Naive thymus-derived CD8-positive, alpha-beta T cell (primary cell): ENCODE measurements at regions of chr19 and their contacts with region 1.

Region 1: GRCh38 chr19:8389891-8390616 is at the start of gene RAB11B:
- DNase-seq: peak; percentile 90 to 99 (median 98)
- ATAC-seq: peak; percentile 92 to 93
- H3K4me3 Mint-ChIP-seq: peak within 1 kb of the TSS; percentile 86 to 97 (median 93)
- H3K27ac Mint-ChIP-seq: peak within 1 kb of the TSS; percentile 81 to 99 (median 96)
- H3K4me1 Mint-ChIP-seq: peaks cover 9 to 48% (median 32%) of the 10 kb centered on the region in 4 donors
- H3K27me3 Mint-ChIP-seq: no peaks in the 10 kb centered on the region
- polyA plus RNA-seq, gene RAB11B: 46.9 to 73.6 (median 53.9) TPM

Region 2: GRCh38 chr19:8401981-8402411 is 11.9 kb after region 1 on chr19:
- POLR2A ChIA-PET with region 1: no interaction called
- DNase-seq: no peak
- ATAC-seq: no peak
- H3K4me3 Mint-ChIP-seq: no peak overlapping the region
- H3K27ac Mint-ChIP-seq: no peak overlapping the region
- H3K4me1 Mint-ChIP-seq: peaks cover 5 to 17% (median 5%) of the 10 kb centered on the region in 4 donors
- H3K27me3 Mint-ChIP-seq: no peaks in the 10 kb centered on the region

Region 3: GRCh38 chr19:8412783-8413628 is 23.0 kb after region 1 on chr19 and contains the start of gene MARCHF2:
- POLR2A ChIA-PET with region 1: interaction called, 10 read pairs
- DNase-seq: peak; percentile 88 to 97 (median 94)
- ATAC-seq: peak; percentile 99 to 100
- H3K4me3 Mint-ChIP-seq: peak within 1 kb of the TSS; percentile 57 to 85 (median 74)
- H3K27ac Mint-ChIP-seq: peak within 1 kb of the TSS in 7 of 10 donors; percentile 19 to 71 (median 65)
- H3K4me1 Mint-ChIP-seq: peaks cover 3 to 19% (median 7%) of the 10 kb centered on the region in 4 donors
- H3K27me3 Mint-ChIP-seq: no peaks in the 10 kb centered on the region
- polyA plus RNA-seq, gene MARCHF2: 21.1 to 40.1 (median 38.2) TPM

Region 4: DNA sequence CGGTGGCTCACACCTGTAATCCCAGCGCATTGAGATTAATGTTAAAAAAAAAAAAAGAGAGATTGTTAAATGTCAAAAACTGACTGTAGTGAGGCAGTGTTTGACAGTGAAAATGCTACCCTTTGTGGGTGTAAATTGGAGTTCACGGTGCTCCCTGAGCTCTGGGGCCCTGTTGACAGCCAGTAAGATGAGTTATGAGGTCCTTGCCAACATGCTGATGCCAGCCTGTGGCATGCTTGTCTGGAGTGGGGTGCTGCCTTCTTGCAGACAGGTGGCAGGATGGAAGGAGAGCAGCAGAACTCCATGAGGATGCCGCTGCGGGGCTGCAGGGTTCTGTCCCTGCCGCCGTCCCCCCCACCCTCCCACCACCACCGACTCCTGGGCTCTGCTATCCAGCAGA is 86.5 kb after region 1 on chr19:
- POLR2A ChIA-PET with region 1: no interaction called
- DNase-seq: no peak
- ATAC-seq: no peak
- H3K4me3 Mint-ChIP-seq: peak overlapping the region in 3 of 10 donors; percentile 15 to 65 (median 32)
- H3K27ac Mint-ChIP-seq: peak overlapping the region in 9 of 10 donors; percentile 26 to 84 (median 58)
- H3K4me1 Mint-ChIP-seq: peaks cover 30 to 78% (median 52%) of the 10 kb centered on the region in 4 donors
- H3K27me3 Mint-ChIP-seq: no peaks in the 10 kb centered on the region